Colonic mucosa (tissue), 4 donors: ENCODE measurements at regions of chr1 and their contacts with region 1.

Region 1: DNA sequence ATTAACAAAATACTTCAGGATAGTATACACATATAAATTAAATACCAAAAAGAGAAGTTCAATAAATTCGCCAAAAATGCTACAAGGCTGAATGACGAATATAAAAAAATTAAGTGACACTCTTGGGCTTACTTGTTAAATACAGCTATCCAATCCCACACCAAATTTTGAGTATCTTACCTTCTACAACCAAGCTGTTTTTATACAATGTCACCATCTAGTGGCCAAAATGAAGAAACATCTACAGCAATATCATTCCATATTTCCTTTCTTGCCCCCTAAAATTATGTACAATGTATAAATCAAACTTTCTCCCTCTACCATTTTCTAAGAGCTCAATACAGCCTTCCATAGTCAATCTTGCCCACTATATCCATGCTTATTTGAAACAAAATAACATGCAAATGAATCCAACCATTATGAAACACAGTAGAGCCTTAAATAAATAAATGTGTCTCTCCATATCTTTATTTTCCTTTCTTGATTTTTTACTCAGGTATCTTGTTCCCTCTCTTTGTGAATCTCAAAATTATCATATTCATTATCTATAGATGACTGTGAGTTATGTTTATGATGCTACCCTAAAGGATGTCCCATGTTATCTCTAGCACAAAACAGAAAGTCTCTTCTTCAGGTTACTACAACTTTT is 86.3 kb downstream of the ACBD6 start:
- DNase-seq: no peak
- H3K4me3 ChIP-seq: no peak overlapping the region
- H3K27ac ChIP-seq: no peak overlapping the region
- H3K4me1 ChIP-seq: no peaks in the 10 kb centered on the region
- H3K27me3 ChIP-seq: no peaks in the 10 kb centered on the region
- CTCF ChIP-seq: peak; percentile 66

Region 2: DNA sequence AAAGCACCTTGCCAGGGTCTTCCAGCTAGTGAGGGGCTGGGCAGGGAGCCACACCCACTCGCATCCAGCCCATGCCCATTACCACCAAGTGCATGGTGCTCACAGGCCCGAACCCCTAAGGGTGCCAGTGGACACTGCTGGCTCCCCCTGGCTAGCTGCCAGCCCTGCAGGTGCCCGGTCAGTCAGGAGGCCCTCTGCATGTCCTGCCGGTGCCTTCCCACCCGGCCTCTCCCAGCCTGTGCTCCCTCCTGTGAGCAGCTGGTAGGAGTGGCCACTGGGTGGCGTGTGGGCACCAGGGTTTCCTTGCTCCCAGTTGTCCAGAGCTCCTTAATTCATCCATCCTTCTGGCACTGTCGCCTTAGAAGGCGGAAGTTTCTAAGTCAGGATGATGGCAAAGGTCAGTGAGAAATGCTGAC is 228.0 kb before region 1 on chr1:
- intact Hi-C with region 1: loop called (anchors 5 kb)
- DNase-seq: peak; percentile 71
- H3K4me3 ChIP-seq: no peak overlapping the region
- H3K27ac ChIP-seq: no peak overlapping the region
- H3K4me1 ChIP-seq: no peaks in the 10 kb centered on the region
- H3K27me3 ChIP-seq: no peaks in the 10 kb centered on the region
- CTCF ChIP-seq: peak; percentile 44

Region 3: GRCh38 chr1:180252638-180253536 is 163.2 kb before region 1 on chr1:
- intact Hi-C with region 1: loop called (anchors 2 kb)
- DNase-seq: peak; percentile 86
- H3K4me3 ChIP-seq: no peak overlapping the region
- H3K27ac ChIP-seq: no peak overlapping the region
- H3K4me1 ChIP-seq: no peaks in the 10 kb centered on the region
- H3K27me3 ChIP-seq: peaks cover 6% of the 10 kb centered on the region
- CTCF ChIP-seq: peak; percentile 82